ENCODE measurements at regions of chr10 and their contacts with region 1.

Region 1: GRCh38 chr10:80662577-80663261 is 125.0 kb downstream of the SH2D4B start:
- H3K4me3 ChIP-seq: no peak overlapping the region
- H3K27ac ChIP-seq: no peak overlapping the region
- H3K4me1 ChIP-seq: no peaks in the 10 kb centered on the region
- CTCF ChIP-seq: peak; percentile 80

Region 2: GRCh38 chr10:80382989-80383388 is 279.7 kb before region 1 on chr10:
- CTCF ChIA-PET with region 1: interaction called, 11 read pairs
- POLR2A ChIA-PET with region 1: no interaction called
- H3K4me3 ChIP-seq: no peak overlapping the region
- H3K27ac ChIP-seq: no peak overlapping the region
- H3K4me1 ChIP-seq: no peaks in the 10 kb centered on the region
- CTCF ChIP-seq: peak; percentile 72

Region 3: GRCh38 chr10:80462981-80463741 is 199.6 kb before region 1 on chr10:
- CTCF ChIA-PET with region 1: no interaction called
- POLR2A ChIA-PET with region 1: no interaction called
- H3K4me3 ChIP-seq: no peak overlapping the region
- H3K27ac ChIP-seq: no peak overlapping the region
- H3K4me1 ChIP-seq: peaks cover 6% of the 10 kb centered on the region
- CTCF ChIP-seq: no peak

Region 4: DNA sequence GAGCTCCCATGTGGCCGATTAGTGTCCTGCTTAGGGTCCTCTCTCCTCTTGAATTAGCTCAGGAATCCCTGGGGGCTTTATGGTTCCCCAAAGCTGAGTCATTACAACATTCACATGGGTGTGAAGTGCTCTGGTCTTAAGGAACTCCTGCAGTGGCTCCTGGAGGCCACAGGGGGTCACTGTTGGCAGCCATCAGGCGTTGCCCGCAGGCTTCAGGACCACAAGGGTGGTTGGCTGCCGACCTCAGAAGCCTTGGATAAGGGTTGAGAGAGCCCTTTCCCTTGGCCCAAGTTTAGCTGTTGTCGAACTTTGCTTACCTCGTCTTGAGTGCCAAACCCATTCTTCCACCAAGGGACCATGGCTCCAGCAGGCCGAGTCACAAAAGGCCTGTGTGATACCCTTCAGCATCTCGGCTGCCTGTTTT is 63.3 kb before region 1 on chr10:
- CTCF ChIA-PET with region 1: interaction called, 42 read pairs
- POLR2A ChIA-PET with region 1: no interaction called
- H3K4me3 ChIP-seq: no peak overlapping the region
- H3K27ac ChIP-seq: no peak overlapping the region
- H3K4me1 ChIP-seq: no peaks in the 10 kb centered on the region
- CTCF ChIP-seq: peak; percentile 71

Region 5: DNA sequence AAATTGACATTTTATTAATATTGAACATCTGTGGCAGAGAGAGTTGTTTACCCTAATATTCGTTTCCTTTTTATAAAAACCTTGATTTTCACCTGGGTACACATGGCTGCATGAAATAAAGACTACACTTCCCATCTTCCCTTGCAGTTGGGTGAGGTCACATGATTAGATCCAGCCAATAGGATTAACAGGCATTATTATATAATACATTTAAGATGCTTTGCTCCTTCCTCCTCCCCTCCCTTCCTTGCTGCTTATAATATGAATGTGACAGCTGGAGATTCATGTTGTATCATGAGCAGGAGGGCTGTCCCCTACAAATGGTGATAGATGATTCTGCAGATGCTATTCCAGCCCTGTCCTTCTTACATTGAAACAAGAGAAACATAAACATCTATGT is 21.5 kb after region 1 on chr10:
- CTCF ChIA-PET with region 1: interaction called, 16 read pairs
- POLR2A ChIA-PET with region 1: no interaction called
- H3K4me3 ChIP-seq: no peak overlapping the region
- H3K27ac ChIP-seq: no peak overlapping the region
- H3K4me1 ChIP-seq: no peaks in the 10 kb centered on the region
- CTCF ChIP-seq: no peak

Region 6: DNA sequence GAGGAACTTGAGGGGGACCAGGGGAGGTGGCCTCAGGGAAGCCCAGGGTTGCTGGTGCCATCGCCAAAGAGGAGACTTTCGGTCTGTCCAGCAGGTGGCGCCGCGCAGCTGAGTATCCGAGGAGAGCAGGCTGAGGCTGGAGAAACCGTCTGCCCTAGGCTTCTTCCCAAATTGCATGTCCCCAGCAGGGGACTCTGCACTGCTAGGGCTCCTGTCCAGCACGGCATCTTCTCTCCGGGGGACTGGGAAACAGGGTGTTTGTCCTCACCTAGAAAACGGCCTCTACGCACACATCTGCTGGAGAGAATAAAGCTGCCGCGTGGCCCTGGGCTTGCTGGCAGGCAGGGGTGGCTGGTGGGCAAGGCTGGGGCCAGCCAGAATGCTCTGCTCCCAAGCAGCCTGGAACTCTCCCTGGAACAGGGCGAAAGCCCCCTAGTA is 36.9 kb after region 1 on chr10:
- CTCF ChIA-PET with region 1: interaction called, 20 read pairs
- POLR2A ChIA-PET with region 1: no interaction called
- H3K4me3 ChIP-seq: no peak overlapping the region
- H3K27ac ChIP-seq: no peak overlapping the region
- H3K4me1 ChIP-seq: no peaks in the 10 kb centered on the region
- CTCF ChIP-seq: peak; percentile 94